Activated CD4-positive, alpha-beta T cell treated with anti-CD3 and anti-CD28 coated beads, Interleukin-2, amount 10 ng/mL, durations not matched to agents 24 days and 14 days (primary cell): ENCODE measurements at regions of chr5 and their contacts with region 1.

Region 1: DNA sequence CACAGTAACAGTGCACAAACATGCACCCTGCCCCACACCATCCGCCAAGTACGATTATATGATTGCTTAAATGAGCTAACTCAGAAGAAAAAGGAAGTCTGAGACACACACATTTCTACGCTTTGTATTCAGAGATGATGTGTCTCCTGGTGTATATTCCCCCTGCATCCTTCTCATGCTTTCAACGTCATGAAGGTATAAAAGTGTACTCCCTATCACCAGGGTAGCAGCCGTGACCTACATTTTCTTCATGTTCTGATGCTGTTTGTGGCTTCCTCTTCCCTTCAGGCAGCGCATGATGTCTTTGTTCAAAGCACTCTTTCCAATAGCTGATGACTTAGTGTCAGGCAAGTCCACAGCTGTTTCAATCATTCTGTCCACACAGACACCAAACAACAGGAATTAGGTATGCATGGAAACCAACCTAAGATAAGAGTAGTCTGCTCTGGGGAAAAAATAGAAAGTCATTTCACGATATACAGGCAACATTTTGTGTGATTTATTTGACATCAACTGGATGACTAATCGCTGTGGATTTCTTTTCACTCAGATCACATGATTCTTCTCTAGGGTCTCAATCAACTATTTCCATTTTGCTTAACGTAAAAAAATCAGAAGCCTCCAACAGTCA is 269.4 kb upstream of the PTGER4 start:
- DNase-seq: peak; percentile 93
- H3K4me3 Mint-ChIP-seq: peak overlapping the region; percentile 79
- H3K27ac Mint-ChIP-seq: peak overlapping the region; percentile 93
- H3K4me1 Mint-ChIP-seq: peaks cover 51% of the 10 kb centered on the region
- H3K27me3 Mint-ChIP-seq: no peaks in the 10 kb centered on the region

Region 2: DNA sequence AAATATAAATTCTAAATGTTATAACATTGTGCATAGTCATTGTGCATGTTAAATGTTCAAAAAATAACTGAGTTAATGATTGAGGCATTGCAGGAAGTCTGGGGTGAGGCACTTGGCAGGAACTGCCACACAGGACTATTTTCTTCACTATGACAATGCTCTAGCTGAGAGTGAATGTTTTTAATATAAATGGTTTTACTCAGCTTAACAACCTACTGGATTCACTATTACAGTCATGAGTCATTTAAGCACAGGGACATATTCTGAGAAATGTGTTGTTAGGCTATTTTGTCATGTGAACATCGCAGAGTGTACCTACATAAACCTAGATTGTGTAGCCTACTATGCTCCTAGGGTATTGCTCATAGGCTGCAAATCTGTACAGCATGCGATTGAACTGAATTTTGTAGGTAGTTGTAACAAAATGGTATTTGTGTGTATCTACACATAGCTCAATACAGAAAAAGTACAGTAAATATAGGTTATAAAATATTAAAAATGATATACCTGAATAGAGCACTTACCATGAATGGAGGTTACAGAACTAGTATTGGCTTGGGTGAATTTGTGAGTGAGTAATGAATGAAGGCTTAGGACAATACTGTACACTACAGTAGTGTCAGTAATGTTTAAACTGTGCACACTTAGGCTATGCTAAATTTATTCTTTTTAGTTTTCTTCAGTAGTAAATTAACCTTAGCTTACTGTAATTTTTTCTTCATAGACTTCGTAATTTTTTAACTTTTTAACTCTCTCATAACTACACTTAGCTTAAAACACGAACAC is 76.7 kb before region 1 on chr5:
- intact Hi-C with region 1: loop called (anchors 2 kb)
- DNase-seq: peak; percentile 59
- H3K4me3 Mint-ChIP-seq: no peak overlapping the region
- H3K27ac Mint-ChIP-seq: no peak overlapping the region
- H3K4me1 Mint-ChIP-seq: peaks cover 19% of the 10 kb centered on the region
- H3K27me3 Mint-ChIP-seq: no peaks in the 10 kb centered on the region

Region 3: GRCh38 chr5:40429258-40430101 is 19.1 kb after region 1 on chr5:
- intact Hi-C with region 1: loop called (anchors 1 kb)
- DNase-seq: peak; percentile 70
- H3K4me3 Mint-ChIP-seq: peak overlapping the region; percentile 49
- H3K27ac Mint-ChIP-seq: peak overlapping the region; percentile 78
- H3K4me1 Mint-ChIP-seq: peaks cover 45% of the 10 kb centered on the region
- H3K27me3 Mint-ChIP-seq: no peaks in the 10 kb centered on the region

Region 4: DNA sequence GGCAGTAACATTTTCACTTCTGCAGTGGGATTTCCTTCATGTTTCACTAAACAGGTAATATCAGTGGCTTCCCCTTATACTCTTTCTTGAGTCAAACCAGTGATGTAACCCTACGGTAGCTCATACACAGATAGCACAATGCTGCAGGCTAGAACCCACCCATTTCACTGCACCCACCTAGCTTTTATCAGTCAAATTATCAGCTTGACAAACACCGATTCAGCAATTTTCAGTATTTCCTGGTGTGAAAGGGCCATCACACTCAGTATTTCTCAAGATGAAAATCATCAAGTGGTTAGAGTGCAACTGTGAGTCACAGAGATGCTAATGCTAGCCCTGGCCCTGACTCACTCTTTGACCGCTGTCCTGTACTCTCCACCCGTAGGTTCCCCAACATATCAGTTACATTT is 27.1 kb after region 1 on chr5:
- intact Hi-C with region 1: loop called (anchors 1 kb)
- DNase-seq: peak; percentile 66
- H3K4me3 Mint-ChIP-seq: peak overlapping the region; percentile 16
- H3K27ac Mint-ChIP-seq: peak overlapping the region; percentile 79
- H3K4me1 Mint-ChIP-seq: peaks cover 69% of the 10 kb centered on the region
- H3K27me3 Mint-ChIP-seq: no peaks in the 10 kb centered on the region

Region 5: GRCh38 chr5:40743771-40744170 is 333.4 kb after region 1 on chr5:
- intact Hi-C with region 1: no loop called
- DNase-seq: no peak
- H3K4me3 Mint-ChIP-seq: no peak overlapping the region
- H3K27ac Mint-ChIP-seq: no peak overlapping the region
- H3K4me1 Mint-ChIP-seq: peaks cover 9% of the 10 kb centered on the region
- H3K27me3 Mint-ChIP-seq: no peaks in the 10 kb centered on the region